Heart right ventricle (tissue), 16 donors: ENCODE measurements at regions of chr14 and their contacts with region 1.

Region 1: GRCh38 chr14:33938131-33938949 is 12.5 kb downstream of the EGLN3 start:
- DNase-seq: peak; percentile 81 to 86
- ATAC-seq: peak; percentile 84 to 97 (median 96)
- H3K4me3 ChIP-seq: peak overlapping the region in 8 of 10 donors; percentile 0 to 41 (median 31)
- H3K27ac ChIP-seq: peak overlapping the region; percentile 48 to 85 (median 80)
- H3K4me1 ChIP-seq: peaks cover 17 to 96% (median 69%) of the 10 kb centered on the region in 9 donors
- H3K27me3 ChIP-seq: no peaks in the 10 kb centered on the region
- CTCF ChIP-seq: no peak

Region 2: DNA sequence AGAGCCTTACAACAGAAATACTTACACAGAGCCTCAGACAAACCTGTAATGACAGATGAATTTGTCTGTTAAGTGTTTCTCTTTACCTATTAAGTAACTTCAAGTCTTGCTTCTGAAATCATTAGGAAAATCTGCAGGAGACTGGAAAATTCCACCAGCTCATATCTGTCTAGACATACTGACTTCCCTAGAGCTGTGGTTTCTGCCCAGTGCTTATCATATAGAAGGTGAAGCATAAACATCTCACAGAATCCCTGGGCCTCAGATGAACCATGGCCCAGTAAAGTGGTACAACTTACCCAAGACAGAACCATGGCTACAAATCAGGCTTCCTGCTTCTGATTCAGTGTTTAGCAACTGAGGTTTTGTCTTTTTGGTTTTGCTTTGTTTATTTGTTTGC is 79.0 kb before region 1 on chr14:
- intact Hi-C with region 1: loop called in 1 of 10 experiments (anchors 10 kb)
- DNase-seq: no peak
- ATAC-seq: no peak
- H3K4me3 ChIP-seq: no peak overlapping the region
- H3K27ac ChIP-seq: no peak overlapping the region
- H3K4me1 ChIP-seq: no peaks in the 10 kb centered on the region
- H3K27me3 ChIP-seq: no peaks in the 10 kb centered on the region
- CTCF ChIP-seq: no peak

Region 3: DNA sequence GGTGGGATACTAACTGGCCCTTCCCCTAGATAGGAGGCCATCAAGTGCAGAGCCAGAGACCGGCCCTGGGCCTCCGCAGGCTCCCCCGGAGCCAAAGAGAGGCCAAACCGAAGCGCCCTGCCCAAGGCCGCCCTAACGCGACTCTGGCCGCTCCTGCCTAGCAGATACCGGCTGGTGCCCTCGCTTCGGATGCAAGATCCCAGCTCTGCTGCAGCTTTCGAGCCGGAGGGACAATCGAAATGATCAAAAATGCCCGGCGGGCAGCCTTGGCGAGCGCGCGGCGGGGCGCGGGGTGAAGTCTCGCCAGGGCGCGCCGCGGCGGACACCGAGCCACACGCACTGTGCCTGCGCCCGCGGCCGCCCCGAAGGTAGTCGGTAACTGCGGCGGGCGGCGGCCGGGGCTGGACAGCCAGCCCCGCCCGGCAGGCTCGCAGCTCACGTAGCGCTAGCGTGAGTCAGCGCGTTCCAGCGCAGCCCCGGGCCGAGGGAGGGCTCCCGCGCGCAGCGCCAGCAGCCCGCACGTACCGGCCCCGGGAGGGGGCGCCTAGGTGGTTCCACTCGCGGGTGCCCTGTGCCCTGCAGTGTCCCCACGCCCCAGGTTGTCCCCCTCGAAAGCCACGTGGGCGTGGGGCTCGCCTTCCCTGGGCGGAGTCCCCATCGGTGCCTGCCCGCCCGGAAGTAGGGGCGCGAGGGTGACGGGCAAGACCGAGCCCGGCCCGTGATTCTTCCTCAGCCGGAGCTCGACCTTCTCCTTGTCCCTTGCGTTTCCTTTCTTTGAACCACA is 121.7 kb after region 1 on chr14:
- intact Hi-C with region 1: loop called in 2 of 10 experiments (anchors 10 kb)
- DNase-seq: peak; percentile 75 to 85
- ATAC-seq: peak; percentile 92 to 97 (median 94)
- H3K4me3 ChIP-seq: peak overlapping the region; percentile 41 to 84 (median 65)
- H3K27ac ChIP-seq: peak overlapping the region; percentile 91 to 98 (median 94)
- H3K4me1 ChIP-seq: peaks cover 11 to 51% (median 19%) of the 10 kb centered on the region in 9 donors
- H3K27me3 ChIP-seq: peaks cover 0 to 2% (median 0%) of the 10 kb centered on the region in 7 donors
- CTCF ChIP-seq: peak in 6 of 9 donors; percentile 27 to 63 (median 52)

Region 4: GRCh38 chr14:34227834-34228649 is 289.7 kb after region 1 on chr14:
- intact Hi-C with region 1: loop called in 3 of 10 experiments (anchors 10 kb)
- DNase-seq: peak; percentile 53 to 73
- ATAC-seq: peak; percentile 91 to 96 (median 94)
- H3K4me3 ChIP-seq: peak overlapping the region in 6 of 10 donors; percentile 12 to 42 (median 34)
- H3K27ac ChIP-seq: no peak overlapping the region
- H3K4me1 ChIP-seq: peaks cover 0 to 30% (median 6%) of the 10 kb centered on the region in 9 donors
- H3K27me3 ChIP-seq: no peaks in the 10 kb centered on the region
- CTCF ChIP-seq: peak; percentile 62 to 95 (median 85)

Region 5: DNA sequence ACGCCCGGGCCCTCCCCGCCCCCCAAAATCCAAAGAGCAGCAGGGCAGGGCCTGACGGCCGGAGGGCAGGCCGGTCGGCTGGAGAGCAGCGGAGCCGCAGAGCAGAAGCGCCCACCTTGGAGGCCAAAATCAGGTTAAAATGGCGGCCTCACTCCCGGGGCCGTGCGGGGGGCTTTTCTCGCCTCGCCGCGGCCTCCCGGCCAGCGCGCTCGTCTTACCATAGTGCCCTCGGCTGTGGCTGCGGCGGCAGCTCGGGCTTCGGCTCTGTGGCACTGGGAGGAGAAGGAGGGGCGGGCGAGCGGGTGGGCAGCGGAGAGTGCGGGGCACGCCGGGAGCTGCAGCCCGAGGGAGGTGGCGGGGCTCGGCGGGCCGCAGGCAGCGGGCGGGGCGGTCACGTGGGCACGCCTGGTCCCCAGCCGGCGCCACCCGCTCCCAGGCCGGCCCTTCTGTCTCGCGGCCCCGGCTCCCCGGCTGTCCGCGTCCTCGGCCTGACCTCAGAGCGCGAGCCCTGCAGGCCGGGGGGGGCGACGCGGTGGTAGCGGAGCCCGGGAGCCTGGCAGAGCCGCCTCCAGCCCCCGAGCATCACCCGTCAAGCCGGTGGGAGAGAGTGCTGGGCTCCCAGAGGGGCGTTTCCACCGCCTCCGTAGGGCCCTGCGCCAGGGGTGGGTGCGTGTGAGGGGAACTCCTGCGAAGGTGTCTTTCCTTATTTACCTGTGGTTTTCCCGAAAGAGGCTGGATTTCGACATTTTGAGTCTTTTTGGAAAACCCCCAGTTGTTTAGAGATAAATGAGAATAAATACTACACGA is 776.2 kb after region 1 on chr14 and contains the start of gene CFL2:
- intact Hi-C with region 1: loop called in 1 of 10 experiments (anchors 10 kb)
- DNase-seq: peak; percentile 85 to 88
- ATAC-seq: peak; percentile 92 to 99 (median 95)
- H3K4me3 ChIP-seq: peak within 1 kb of the TSS; percentile 78 to 94 (median 86)
- H3K27ac ChIP-seq: peak within 1 kb of the TSS; percentile 94 to 100 (median 98)
- H3K4me1 ChIP-seq: peaks cover 0 to 48% (median 32%) of the 10 kb centered on the region in 9 donors
- H3K27me3 ChIP-seq: no peaks in the 10 kb centered on the region
- CTCF ChIP-seq: no peak
- total RNA-seq, gene CFL2: 345 to 918 (median 571) TPM